ENCODE measurements at regions of chr3 and their contacts with region 1.

Region 1: GRCh38 chr3:49929331-49930240 is at the start of gene MON1A:
- H3K4me3 Mint-ChIP-seq: peak within 1 kb of the TSS; percentile 84
- H3K27ac Mint-ChIP-seq: peak within 1 kb of the TSS; percentile 87
- H3K4me1 Mint-ChIP-seq: peaks cover 24% of the 10 kb centered on the region
- H3K27me3 Mint-ChIP-seq: no peaks in the 10 kb centered on the region

Region 2: GRCh38 chr3:49939858-49940666 is 10.5 kb after region 1 on chr3 and contains the start of gene RBM6:
- intact Hi-C with region 1: loop called (anchors 1 kb)
- H3K4me3 Mint-ChIP-seq: peak within 1 kb of the TSS; percentile 86
- H3K27ac Mint-ChIP-seq: peak within 1 kb of the TSS; percentile 95
- H3K4me1 Mint-ChIP-seq: peaks cover 33% of the 10 kb centered on the region
- H3K27me3 Mint-ChIP-seq: no peaks in the 10 kb centered on the region

Measured in dendritic cell treated with granulocyte-macrophage colony-stimulating factor and Interleukin-4, amounts not matched to agents 40 ng/mL and 50 ng/mL, for 4 days (primary cell).